Activated CD8-positive, alpha-beta memory T cell treated with anti-CD3 and anti-CD28 coated beads, Interleukin-2, amount 10 ng/mL, durations not matched to agents 7 days and 5 days (primary cell): ENCODE measurements at regions of chr10 and their contacts with region 1.

Region 1: DNA sequence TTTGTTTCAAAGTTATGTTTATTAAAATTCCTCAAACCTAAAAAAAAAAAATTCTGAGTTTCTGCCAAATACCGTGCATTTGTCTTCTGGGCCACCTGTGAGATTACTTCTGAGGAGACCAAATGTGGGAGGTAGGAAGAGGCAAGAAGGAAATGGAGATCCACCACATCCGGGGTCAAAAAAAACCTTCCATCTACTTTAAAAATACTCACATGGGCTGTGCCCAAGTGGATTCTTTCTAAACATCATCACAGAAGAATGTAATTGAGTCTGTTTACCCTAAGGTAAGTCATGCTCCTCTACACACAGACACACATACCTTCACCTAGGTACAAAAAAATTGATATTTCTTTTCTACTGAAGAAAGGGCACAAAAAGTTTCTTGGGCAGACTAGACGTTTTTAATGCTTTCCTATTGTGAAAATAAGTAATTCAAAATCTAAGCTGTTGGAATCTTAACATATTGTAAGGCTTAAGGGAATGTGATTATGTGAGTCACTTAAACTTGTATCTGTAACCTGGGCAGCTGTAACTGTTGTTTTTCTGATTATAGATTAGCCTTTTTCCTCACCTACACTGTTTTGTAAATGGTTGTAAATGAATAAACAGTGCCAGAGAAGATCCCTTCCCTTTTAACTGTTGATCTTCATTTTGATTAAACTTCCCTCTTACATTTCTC is 19.1 kb upstream of the SPOCK2 start:
- DNase-seq: peak; percentile 52
- ATAC-seq: peak; percentile 77
- H3K4me3 Mint-ChIP-seq: peak overlapping the region; percentile 66
- H3K27ac Mint-ChIP-seq: peak overlapping the region; percentile 86
- H3K4me1 Mint-ChIP-seq: peaks cover 41% of the 10 kb centered on the region
- H3K27me3 Mint-ChIP-seq: no peaks in the 10 kb centered on the region

Region 2: GRCh38 chr10:72337020-72337629 is 229.7 kb after region 1 on chr10:
- CTCF ChIA-PET with region 1: interaction called, 11 read pairs
- DNase-seq: peak; percentile 75
- ATAC-seq: no peak
- H3K4me3 Mint-ChIP-seq: no peak overlapping the region
- H3K27ac Mint-ChIP-seq: peak overlapping the region; percentile 22
- H3K4me1 Mint-ChIP-seq: peaks cover 67% of the 10 kb centered on the region
- H3K27me3 Mint-ChIP-seq: no peaks in the 10 kb centered on the region